ENCODE measurements at regions of chr16 and their contacts with region 1.

Region 1: DNA sequence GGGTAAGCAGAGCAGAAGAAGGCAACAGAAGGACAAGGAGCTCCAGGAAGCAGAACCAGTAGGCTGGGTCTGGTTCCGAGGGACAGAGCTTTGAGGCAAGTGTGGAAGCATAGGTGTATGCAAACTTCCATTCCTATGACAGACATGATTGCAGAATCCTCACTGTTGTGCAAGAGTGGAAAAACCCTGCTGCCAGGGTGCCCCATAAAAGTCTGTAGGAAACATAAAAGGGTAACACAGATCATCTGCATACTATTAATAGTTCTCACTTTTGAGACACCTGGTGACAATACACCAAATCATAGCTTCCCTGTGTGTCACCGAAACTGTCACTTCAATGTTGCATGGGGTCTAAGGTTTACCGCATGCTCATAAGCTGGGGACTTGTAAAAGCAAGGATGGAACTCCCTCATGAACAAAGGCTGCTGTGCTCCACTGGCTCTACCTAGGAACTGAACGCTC is 39.7 kb downstream of the ARHGAP17 start:
- DNase-seq: peak; percentile 51
- ATAC-seq: peak; percentile 56
- H3K4me3 ChIP-seq: no peak overlapping the region
- H3K4me3 Mint-ChIP-seq: peak overlapping the region; percentile 57
- H3K27ac ChIP-seq: peak overlapping the region in 1 of 2 donors; percentile 79
- H3K27ac Mint-ChIP-seq: peak overlapping the region; percentile 87
- H3K4me1 ChIP-seq: peaks cover 62 to 73% of the 10 kb centered on the region in 2 donors
- H3K4me1 Mint-ChIP-seq: peaks cover 76% of the 10 kb centered on the region
- H3K27me3 ChIP-seq: no peaks in the 10 kb centered on the region
- H3K27me3 Mint-ChIP-seq: no peaks in the 10 kb centered on the region
- CTCF ChIP-seq: no peak

Region 2: GRCh38 chr16:24822542-24822941 is 152.9 kb before region 1 on chr16:
- CTCF ChIA-PET with region 1: no interaction called
- POLR2A ChIA-PET with region 1: no interaction called
- intact Hi-C with region 1: no loop called
- DNase-seq: no peak
- ATAC-seq: no peak
- H3K4me3 ChIP-seq: no peak overlapping the region
- H3K4me3 Mint-ChIP-seq: no peak overlapping the region
- H3K27ac ChIP-seq: no peak overlapping the region
- H3K27ac Mint-ChIP-seq: peak overlapping the region; percentile 37
- H3K4me1 ChIP-seq: no peaks in the 10 kb centered on the region
- H3K4me1 Mint-ChIP-seq: no peaks in the 10 kb centered on the region
- H3K27me3 ChIP-seq: no peaks in the 10 kb centered on the region
- H3K27me3 Mint-ChIP-seq: no peaks in the 10 kb centered on the region
- CTCF ChIP-seq: no peak

Region 3: DNA sequence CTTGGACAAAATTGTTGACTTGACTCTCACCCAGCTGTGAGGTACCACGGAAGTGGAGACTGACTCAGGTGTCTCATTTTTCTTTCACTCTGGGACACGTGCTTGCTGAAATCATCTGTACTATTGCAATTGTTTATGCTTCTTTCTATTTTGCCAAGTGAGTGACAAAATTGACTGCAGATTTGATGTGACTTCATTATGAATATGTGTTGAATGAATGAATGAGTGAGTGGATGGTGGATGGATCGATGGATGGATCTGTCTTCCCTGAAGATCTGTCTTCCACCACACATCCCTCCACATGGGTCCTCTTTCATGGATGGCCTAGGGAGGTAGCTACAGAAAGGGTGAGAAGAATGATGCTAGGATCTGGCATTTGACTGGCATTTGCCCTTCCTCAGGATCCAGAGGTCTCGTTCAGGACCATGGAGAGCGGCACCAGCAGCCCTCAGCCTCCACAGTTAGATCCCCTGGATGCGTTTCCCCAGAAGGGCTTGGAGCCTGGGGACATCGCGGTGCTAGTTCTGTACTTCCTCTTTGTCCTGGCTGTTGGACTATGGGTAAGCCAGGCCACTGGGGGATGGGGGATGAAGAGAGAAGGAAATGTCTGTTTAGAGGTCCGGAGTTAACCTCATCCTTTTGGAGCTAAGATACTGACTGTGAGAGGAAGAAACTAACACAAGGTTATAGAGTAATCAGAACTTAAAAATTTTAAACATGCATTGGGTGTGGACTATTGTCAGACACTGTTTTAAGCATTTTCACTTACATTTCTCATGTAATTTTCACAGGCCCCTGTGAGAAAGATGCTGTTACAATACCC is 117.0 kb before region 1 on chr16:
- CTCF ChIA-PET with region 1: no interaction called
- POLR2A ChIA-PET with region 1: no interaction called
- intact Hi-C with region 1: no loop called
- DNase-seq: peak; percentile 39
- ATAC-seq: no peak
- H3K4me3 ChIP-seq: no peak overlapping the region
- H3K4me3 Mint-ChIP-seq: no peak overlapping the region
- H3K27ac ChIP-seq: no peak overlapping the region
- H3K27ac Mint-ChIP-seq: no peak overlapping the region
- H3K4me1 ChIP-seq: no peaks in the 10 kb centered on the region
- H3K4me1 Mint-ChIP-seq: no peaks in the 10 kb centered on the region
- H3K27me3 ChIP-seq: peaks cover 0 to 7% (median 0%) of the 10 kb centered on the region in 4 experiments
- H3K27me3 Mint-ChIP-seq: peaks cover 11% of the 10 kb centered on the region
- CTCF ChIP-seq: no peak

Region 4: GRCh38 chr16:24950275-24950674 is 25.2 kb before region 1 on chr16:
- CTCF ChIA-PET with region 1: no interaction called
- POLR2A ChIA-PET with region 1: no interaction called
- intact Hi-C with region 1: no loop called
- DNase-seq: no peak
- ATAC-seq: no peak
- H3K4me3 ChIP-seq: no peak overlapping the region
- H3K4me3 Mint-ChIP-seq: no peak overlapping the region
- H3K27ac ChIP-seq: no peak overlapping the region
- H3K27ac Mint-ChIP-seq: no peak overlapping the region
- H3K4me1 ChIP-seq: no peaks in the 10 kb centered on the region
- H3K4me1 Mint-ChIP-seq: peaks cover 2% of the 10 kb centered on the region
- H3K27me3 ChIP-seq: no peaks in the 10 kb centered on the region
- H3K27me3 Mint-ChIP-seq: no peaks in the 10 kb centered on the region
- CTCF ChIP-seq: no peak

Region 5: DNA sequence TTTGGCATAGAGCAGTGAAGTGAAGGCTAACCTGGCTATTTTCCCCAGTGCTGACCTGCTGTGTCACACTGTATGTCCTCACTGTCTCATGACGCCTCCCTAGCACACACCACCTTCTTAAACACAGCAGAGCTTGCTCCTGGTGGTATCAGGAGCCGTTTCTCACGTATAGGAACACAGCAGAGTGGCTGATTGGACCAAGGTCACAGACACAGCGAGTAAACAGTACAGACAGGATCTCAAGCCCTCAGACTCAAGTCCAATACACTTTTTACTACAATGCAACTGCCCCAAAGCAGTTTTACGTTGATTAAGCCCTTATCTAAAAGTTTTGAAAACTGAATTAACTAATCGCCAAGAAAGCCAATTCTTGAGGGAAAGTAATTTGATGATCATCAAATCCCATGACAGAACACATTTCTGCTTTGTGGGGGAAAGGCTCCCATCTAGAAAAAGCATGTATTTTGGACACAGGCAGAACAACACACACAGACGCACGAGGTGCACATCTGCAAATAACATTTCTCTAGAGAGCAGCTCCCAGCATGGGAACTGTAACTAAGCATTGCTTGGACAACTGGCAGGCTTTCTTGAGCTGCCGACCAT is 24.5 kb after region 1 on chr16:
- CTCF ChIA-PET with region 1: interaction called, 3 read pairs
- POLR2A ChIA-PET with region 1: no interaction called
- intact Hi-C with region 1: loop called (anchors 2 kb)
- DNase-seq: no peak
- ATAC-seq: no peak
- H3K4me3 ChIP-seq: no peak overlapping the region
- H3K4me3 Mint-ChIP-seq: peak overlapping the region; percentile 63
- H3K27ac ChIP-seq: peak overlapping the region in 1 of 2 donors; percentile 51
- H3K27ac Mint-ChIP-seq: peak overlapping the region; percentile 69
- H3K4me1 ChIP-seq: peaks cover 75 to 86% of the 10 kb centered on the region in 2 donors
- H3K4me1 Mint-ChIP-seq: peaks cover 89% of the 10 kb centered on the region
- H3K27me3 ChIP-seq: no peaks in the 10 kb centered on the region
- H3K27me3 Mint-ChIP-seq: no peaks in the 10 kb centered on the region
- CTCF ChIP-seq: no peak

Region 6: DNA sequence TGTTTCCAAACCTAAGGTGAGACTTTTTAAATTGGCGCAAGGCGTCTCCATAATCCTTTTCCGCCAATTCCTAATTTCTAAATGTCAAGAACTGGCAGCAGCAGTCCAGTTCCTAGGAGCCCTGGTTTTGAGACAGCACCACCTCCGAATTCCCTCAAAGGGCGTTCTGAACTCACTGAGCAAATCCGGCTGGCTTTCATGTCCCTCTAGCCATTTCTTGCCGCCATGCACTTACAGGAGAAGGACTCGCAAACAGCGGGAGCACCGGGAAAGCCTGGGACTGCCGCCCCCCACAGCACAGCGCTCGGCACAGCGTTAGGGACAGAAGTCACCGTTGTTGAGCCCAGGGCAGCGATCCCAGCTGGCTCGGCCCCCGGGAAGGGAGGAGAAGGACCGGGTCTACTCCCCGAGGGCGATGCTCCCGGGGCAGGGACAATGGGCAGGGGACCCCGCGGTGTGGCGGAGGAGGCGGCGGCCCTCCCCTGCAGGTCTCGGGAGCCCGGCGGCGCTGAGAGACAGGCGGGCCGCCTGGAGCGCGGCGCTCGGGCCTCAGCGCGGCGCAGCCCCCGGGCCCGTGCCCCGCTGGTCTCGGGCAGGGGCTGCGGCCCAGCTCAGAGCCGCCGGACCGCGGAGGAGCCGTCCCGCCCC is 39.2 kb after region 1 on chr16:
- CTCF ChIA-PET with region 1: interaction called, 4 read pairs
- POLR2A ChIA-PET with region 1: interaction called, 5 read pairs
- intact Hi-C with region 1: loop called (anchors 1 kb)
- DNase-seq: no peak
- ATAC-seq: peak; percentile 16
- H3K4me3 ChIP-seq: peak overlapping the region; percentile 73 to 92 (median 79)
- H3K4me3 Mint-ChIP-seq: peak overlapping the region; percentile 97
- H3K27ac ChIP-seq: peak overlapping the region; percentile 61 to 89
- H3K27ac Mint-ChIP-seq: peak overlapping the region; percentile 96
- H3K4me1 ChIP-seq: peaks cover 75 to 80% of the 10 kb centered on the region in 2 donors
- H3K4me1 Mint-ChIP-seq: peaks cover 84% of the 10 kb centered on the region
- H3K27me3 ChIP-seq: no peaks in the 10 kb centered on the region
- H3K27me3 Mint-ChIP-seq: no peaks in the 10 kb centered on the region
- CTCF ChIP-seq: no peak

Region 7: GRCh38 chr16:25031441-25032307 is 56.2 kb after region 1 on chr16:
- CTCF ChIA-PET with region 1: no interaction called
- POLR2A ChIA-PET with region 1: no interaction called
- intact Hi-C with region 1: loop called (anchors 5 kb)
- DNase-seq: peak; percentile 95
- ATAC-seq: peak; percentile 98
- H3K4me3 ChIP-seq: peak overlapping the region; percentile 70 to 91 (median 74)
- H3K4me3 Mint-ChIP-seq: peak overlapping the region; percentile 85
- H3K27ac ChIP-seq: peak overlapping the region; percentile 76 to 81
- H3K27ac Mint-ChIP-seq: peak overlapping the region; percentile 87
- H3K4me1 ChIP-seq: peaks cover 29 to 47% of the 10 kb centered on the region in 2 donors
- H3K4me1 Mint-ChIP-seq: peaks cover 45% of the 10 kb centered on the region
- H3K27me3 ChIP-seq: no peaks in the 10 kb centered on the region
- H3K27me3 Mint-ChIP-seq: no peaks in the 10 kb centered on the region
- CTCF ChIP-seq: no peak

Region 8: DNA sequence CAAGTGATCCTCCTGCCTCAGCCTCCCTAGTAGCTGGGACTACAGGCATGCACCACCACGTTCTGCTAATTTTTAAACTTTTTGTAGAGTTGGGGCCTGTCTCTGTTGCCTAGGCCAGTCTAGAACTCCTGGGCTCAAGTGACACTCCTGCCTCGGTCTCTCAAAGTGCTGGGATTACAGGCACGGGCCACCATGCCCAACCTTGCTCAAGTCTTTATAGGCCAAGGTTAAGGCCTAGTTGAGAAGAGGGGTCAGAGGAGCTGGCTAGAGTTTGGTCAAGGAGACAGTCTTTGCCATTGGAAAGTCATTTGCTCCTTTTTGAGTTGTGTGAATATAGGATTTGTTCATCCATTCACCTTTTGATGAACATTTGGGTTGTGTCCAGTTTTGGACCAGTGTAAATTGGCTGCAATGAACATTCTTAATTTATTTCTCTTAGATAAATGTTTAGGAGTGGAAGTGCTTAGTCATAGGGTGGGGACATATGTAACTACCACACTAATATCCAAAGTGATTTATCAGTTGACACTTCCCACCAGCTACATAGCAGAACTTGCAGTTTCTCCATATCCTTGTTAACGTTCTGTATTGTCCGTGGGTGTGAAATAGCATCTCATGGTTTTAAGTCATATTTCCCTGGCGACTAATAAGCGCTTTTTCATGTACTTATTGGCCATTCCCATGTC is 70.4 kb after region 1 on chr16:
- CTCF ChIA-PET with region 1: interaction called, 3 read pairs
- POLR2A ChIA-PET with region 1: interaction called, 9 read pairs
- intact Hi-C with region 1: loop called (anchors 5 kb)
- DNase-seq: no peak
- ATAC-seq: no peak
- H3K4me3 ChIP-seq: no peak overlapping the region
- H3K4me3 Mint-ChIP-seq: no peak overlapping the region
- H3K27ac ChIP-seq: no peak overlapping the region
- H3K27ac Mint-ChIP-seq: peak overlapping the region; percentile 61
- H3K4me1 ChIP-seq: peaks cover 40 to 42% of the 10 kb centered on the region in 2 donors
- H3K4me1 Mint-ChIP-seq: peaks cover 47% of the 10 kb centered on the region
- H3K27me3 ChIP-seq: no peaks in the 10 kb centered on the region
- H3K27me3 Mint-ChIP-seq: no peaks in the 10 kb centered on the region
- CTCF ChIP-seq: no peak

Measured in B cell (primary cell).